K562 (cell line): ENCODE measurements at regions of chr17 and their contacts with region 1.

Region 1: DNA sequence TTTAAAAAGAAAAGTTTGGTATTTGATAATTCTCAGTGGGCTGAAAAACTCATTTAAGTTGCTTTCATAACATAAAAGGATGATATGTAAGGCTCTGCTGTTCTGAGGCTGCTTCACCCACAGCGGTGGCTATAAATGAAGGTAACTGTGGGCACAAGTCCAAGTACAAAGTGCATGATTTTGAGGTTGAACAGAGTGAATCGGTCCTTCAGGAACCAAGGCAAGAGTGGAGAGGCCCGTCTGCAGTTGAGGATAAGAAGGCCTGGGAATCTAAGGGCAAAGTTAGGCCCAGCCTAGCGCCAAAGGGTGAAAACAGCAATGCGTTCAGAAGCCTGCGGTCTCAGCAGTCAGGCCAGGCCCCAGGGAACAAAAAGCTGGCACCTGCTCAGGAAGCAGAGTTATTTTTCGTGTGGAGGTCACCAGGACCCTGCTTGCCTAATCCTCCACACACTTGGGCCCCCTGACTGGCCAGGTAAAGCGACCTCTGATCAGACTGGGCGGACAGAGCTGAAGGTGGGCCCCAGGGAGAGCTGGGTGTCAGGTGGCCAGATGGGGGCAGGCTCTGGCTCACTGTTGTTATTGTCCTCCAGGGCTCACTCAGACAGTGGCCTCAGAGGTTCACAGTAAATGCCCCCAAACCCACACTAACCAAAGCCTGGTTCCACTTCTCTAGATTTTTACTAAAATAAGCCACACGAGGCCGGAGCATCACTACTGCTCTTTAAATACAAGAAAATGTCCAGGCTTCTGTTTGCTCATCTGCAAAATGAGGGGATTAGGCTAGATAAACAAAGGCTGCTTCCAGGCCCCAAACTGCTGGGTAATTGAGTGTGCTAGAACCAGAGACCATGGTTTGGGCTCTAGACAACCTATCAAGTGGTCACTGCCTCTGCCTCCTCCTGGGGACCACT is 46.5 kb downstream of the TEX2 start:
- DNase-seq: peak; percentile 60 to 74 (median 64)
- ATAC-seq: peak; percentile 90
- H3K4me3 ChIP-seq: no peak overlapping the region
- H3K27ac ChIP-seq: peak overlapping the region; percentile 71
- H3K4me1 ChIP-seq: peaks cover 27 to 55% of the 10 kb centered on the region in 2 experiments; a peak in 4 of 5 replicates
- H3K27me3 ChIP-seq: no peaks in the 10 kb centered on the region
- CTCF ChIP-seq: peak; percentile 55 to 68 (median 56)
- EP300 ChIP-seq: no peak
- POLR2A ChIP-seq: no peak
- RAD21 ChIP-seq: peak in 1 of 2 experiments; percentile 44; a peak in 2 of 4 replicates

Region 2: GRCh38 chr17:64230795-64231408 is 14.3 kb after region 1 on chr17:
- CTCF ChIA-PET with region 1: no interaction called
- POLR2A ChIA-PET with region 1: interaction called, 13 read pairs
- in situ Hi-C with region 1: no loop called
- intact Hi-C with region 1: no loop called
- DNase-seq: no peak
- ATAC-seq: peak; percentile 63
- H3K4me3 ChIP-seq: no peak overlapping the region
- H3K27ac ChIP-seq: 0 out of 3 replicates have a peak overlapping the region, but pooled peaks have one; percentile 27
- H3K4me1 ChIP-seq: peaks cover 11 to 33% of the 10 kb centered on the region in 2 experiments; a peak in 4 of 5 replicates
- H3K27me3 ChIP-seq: no peaks in the 10 kb centered on the region
- CTCF ChIP-seq: no peak
- EP300 ChIP-seq: no peak
- POLR2A ChIP-seq: no peak
- RAD21 ChIP-seq: no peak

Region 3: GRCh38 chr17:64262417-64263260 is 46.0 kb after region 1 on chr17 and contains the start of gene TEX2:
- CTCF ChIA-PET with region 1: no interaction called
- POLR2A ChIA-PET with region 1: no interaction called
- in situ Hi-C with region 1: no loop called
- intact Hi-C with region 1: loop called (anchors 5 kb)
- DNase-seq: peak; percentile 45 to 62 (median 52)
- ATAC-seq: peak; percentile 69
- H3K4me3 ChIP-seq: peak within 1 kb of the TSS; percentile 94
- H3K27ac ChIP-seq: peak within 1 kb of the TSS; percentile 84
- H3K4me1 ChIP-seq: peaks cover 11 to 27% of the 10 kb centered on the region in 2 experiments; a peak in 4 of 5 replicates
- H3K27me3 ChIP-seq: peaks cover 3 to 6% of the 10 kb centered on the region in 2 experiments; a peak in 2 of 5 replicates
- CTCF ChIP-seq: no peak
- EP300 ChIP-seq: no peak
- POLR2A ChIP-seq: peak; percentile 59
- RAD21 ChIP-seq: no peak
- polyA plus RNA-seq, gene TEX2: 4.1 to 4.8 TPM

Region 4: GRCh38 chr17:64281962-64282727 is 65.6 kb after region 1 on chr17:
- CTCF ChIA-PET with region 1: interaction called, 5 read pairs
- POLR2A ChIA-PET with region 1: no interaction called
- in situ Hi-C with region 1: no loop called
- intact Hi-C with region 1: loop called (anchors 5 kb)
- DNase-seq: peak; percentile 73 to 81 (median 80)
- ATAC-seq: peak; percentile 80
- H3K4me3 ChIP-seq: no peak overlapping the region
- H3K27ac ChIP-seq: no peak overlapping the region
- H3K4me1 ChIP-seq: peaks cover 0 to 3% of the 10 kb centered on the region in 2 experiments; a peak in 1 of 5 replicates
- H3K27me3 ChIP-seq: no peaks in the 10 kb centered on the region
- CTCF ChIP-seq: peak; percentile 79 to 92 (median 88)
- EP300 ChIP-seq: no peak
- POLR2A ChIP-seq: no peak
- RAD21 ChIP-seq: peak; percentile 84

Region 5: GRCh38 chr17:64320613-64321553 is 104.3 kb after region 1 on chr17:
- CTCF ChIA-PET with region 1: no interaction called
- POLR2A ChIA-PET with region 1: no interaction called
- in situ Hi-C with region 1: no loop called
- intact Hi-C with region 1: no loop called
- DNase-seq: peak; percentile 80 to 84 (median 84)
- ATAC-seq: peak; percentile 88
- H3K4me3 ChIP-seq: no peak overlapping the region
- H3K27ac ChIP-seq: no peak overlapping the region
- H3K4me1 ChIP-seq: peaks cover 0 to 7% of the 10 kb centered on the region in 2 experiments; a peak in 1 of 5 replicates
- H3K27me3 ChIP-seq: no peaks in the 10 kb centered on the region; a peak in 1 of 5 replicates
- CTCF ChIP-seq: peak; percentile 78 to 94 (median 83)
- EP300 ChIP-seq: peak; percentile 26; the same call in 1 of the 2 replicates
- POLR2A ChIP-seq: no peak
- RAD21 ChIP-seq: peak; percentile 91 to 96

Region 6: GRCh38 chr17:64441772-64442540 is 225.4 kb after region 1 on chr17:
- CTCF ChIA-PET with region 1: no interaction called
- POLR2A ChIA-PET with region 1: no interaction called
- in situ Hi-C with region 1: no loop called
- intact Hi-C with region 1: no loop called
- DNase-seq: peak in 1 of 4 experiments; percentile 38
- ATAC-seq: peak; percentile 78
- H3K4me3 ChIP-seq: no peak overlapping the region
- H3K27ac ChIP-seq: peak overlapping the region; percentile 36; the same call in 2 of the 3 replicates
- H3K4me1 ChIP-seq: peaks cover 4 to 9% of the 10 kb centered on the region in 2 experiments; a peak in 4 of 5 replicates
- H3K27me3 ChIP-seq: no peaks in the 10 kb centered on the region
- CTCF ChIP-seq: no peak
- EP300 ChIP-seq: no peak
- POLR2A ChIP-seq: no peak
- RAD21 ChIP-seq: no peak